CD4-positive, alpha-beta T cell (primary cell): ENCODE measurements at regions of chr4 and their contacts with region 1.

Region 1: DNA sequence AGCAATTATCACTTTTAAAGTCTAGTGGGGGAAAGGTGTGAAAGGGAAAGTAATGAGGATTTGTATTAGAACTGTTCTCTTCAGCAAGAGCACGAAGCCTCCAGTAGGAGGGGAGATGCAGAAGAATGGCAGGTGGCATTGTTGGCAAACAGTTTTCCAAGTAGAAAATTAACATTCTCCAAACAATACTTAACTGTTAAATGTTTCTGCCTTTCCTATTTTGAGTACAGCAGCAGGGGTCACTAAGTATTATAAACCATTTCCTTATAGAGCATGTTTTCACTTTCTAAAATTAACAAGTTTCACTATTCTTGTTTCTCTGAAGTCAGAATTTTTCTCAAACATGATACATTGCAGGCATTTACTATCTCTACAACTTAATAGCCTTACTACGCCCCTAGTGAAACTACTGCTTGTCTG is 58.7 kb downstream of the LEF1 start:
- DNase-seq: peak in 1 of 14 experiments; percentile 10
- ATAC-seq: no peak
- H3K4me3 ChIP-seq: peak overlapping the region; percentile 2
- H3K4me3 Mint-ChIP-seq: peak overlapping the region; percentile 73
- H3K27ac ChIP-seq: peak overlapping the region; percentile 48 to 89
- H3K27ac Mint-ChIP-seq: peak overlapping the region; percentile 92
- H3K4me1 ChIP-seq: peaks cover 85% of the 10 kb centered on the region
- H3K4me1 Mint-ChIP-seq: peaks cover 95% of the 10 kb centered on the region
- H3K27me3 ChIP-seq: no peaks in the 10 kb centered on the region
- H3K27me3 Mint-ChIP-seq: no peaks in the 10 kb centered on the region
- CTCF ChIP-seq: no peak

Region 2: GRCh38 chr4:106444557-106444956 is 1665.5 kb before region 1 on chr4:
- CTCF ChIA-PET with region 1: no interaction called
- POLR2A ChIA-PET with region 1: no interaction called
- intact Hi-C with region 1: no loop called
- DNase-seq: no peak
- ATAC-seq: no peak
- H3K4me3 ChIP-seq: no peak overlapping the region
- H3K4me3 Mint-ChIP-seq: no peak overlapping the region
- H3K27ac ChIP-seq: no peak overlapping the region
- H3K27ac Mint-ChIP-seq: no peak overlapping the region
- H3K4me1 ChIP-seq: no peaks in the 10 kb centered on the region
- H3K4me1 Mint-ChIP-seq: no peaks in the 10 kb centered on the region
- H3K27me3 ChIP-seq: no peaks in the 10 kb centered on the region
- H3K27me3 Mint-ChIP-seq: no peaks in the 10 kb centered on the region
- CTCF ChIP-seq: no peak

Region 3: DNA sequence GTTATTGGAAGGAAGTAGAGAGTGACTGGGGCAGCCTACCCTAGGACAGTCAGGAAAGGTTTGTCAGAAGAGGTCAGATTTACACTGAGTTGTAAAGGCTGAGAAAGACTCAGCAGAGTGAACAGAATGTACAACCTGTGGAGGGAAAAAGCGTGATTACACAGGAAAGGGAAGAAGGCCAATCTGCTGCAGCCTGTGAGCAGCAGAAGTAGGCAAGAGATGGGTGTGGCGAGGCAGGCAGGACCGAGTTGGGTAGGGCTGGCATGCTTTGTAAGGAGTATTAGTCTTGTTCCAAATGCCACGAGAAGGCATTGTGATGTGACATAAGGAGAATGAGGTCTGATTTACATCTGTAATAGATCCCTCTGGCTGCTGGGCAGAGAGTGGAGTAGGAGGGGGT is 272.7 kb before region 1 on chr4:
- CTCF ChIA-PET with region 1: no interaction called
- POLR2A ChIA-PET with region 1: no interaction called
- intact Hi-C with region 1: no loop called
- DNase-seq: peak in 2 of 14 experiments; percentile 14 to 15
- ATAC-seq: no peak
- H3K4me3 ChIP-seq: no peak overlapping the region
- H3K4me3 Mint-ChIP-seq: no peak overlapping the region
- H3K27ac ChIP-seq: no peak overlapping the region
- H3K27ac Mint-ChIP-seq: no peak overlapping the region
- H3K4me1 ChIP-seq: no peaks in the 10 kb centered on the region
- H3K4me1 Mint-ChIP-seq: no peaks in the 10 kb centered on the region
- H3K27me3 ChIP-seq: no peaks in the 10 kb centered on the region
- H3K27me3 Mint-ChIP-seq: peaks cover 5% of the 10 kb centered on the region
- CTCF ChIP-seq: no peak

Region 4: DNA sequence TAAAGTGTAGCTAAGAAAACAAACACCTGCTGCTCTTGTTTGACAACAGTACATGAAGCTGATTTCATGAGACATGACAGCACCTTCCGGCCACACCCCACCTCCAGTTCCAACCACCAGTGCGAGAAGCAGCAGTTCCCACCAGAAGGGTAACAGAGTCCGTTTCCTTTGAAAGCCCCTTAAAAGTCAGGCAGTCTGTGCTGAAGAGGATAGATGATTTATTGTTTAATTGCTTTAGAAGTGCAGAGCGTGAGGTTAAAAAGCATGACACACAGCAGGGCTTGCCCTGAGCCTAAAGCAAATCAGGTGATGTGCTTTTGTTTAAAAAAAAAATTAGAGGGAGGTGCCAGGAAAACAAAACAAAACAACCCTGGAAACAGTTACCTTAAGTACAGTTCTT is 37.7 kb before region 1 on chr4:
- CTCF ChIA-PET with region 1: interaction called, 4 read pairs
- POLR2A ChIA-PET with region 1: interaction called, 15 read pairs
- intact Hi-C with region 1: loop called in 1 of 2 experiments (anchors 5 kb)
- DNase-seq: peak; percentile 50 to 86 (median 70)
- ATAC-seq: peak; percentile 83
- H3K4me3 ChIP-seq: no peak overlapping the region
- H3K4me3 Mint-ChIP-seq: peak overlapping the region; percentile 44
- H3K27ac ChIP-seq: peak overlapping the region; percentile 49 to 86
- H3K27ac Mint-ChIP-seq: peak overlapping the region; percentile 88
- H3K4me1 ChIP-seq: peaks cover 28% of the 10 kb centered on the region
- H3K4me1 Mint-ChIP-seq: peaks cover 81% of the 10 kb centered on the region
- H3K27me3 ChIP-seq: no peaks in the 10 kb centered on the region
- H3K27me3 Mint-ChIP-seq: no peaks in the 10 kb centered on the region
- CTCF ChIP-seq: no peak

Region 5: DNA sequence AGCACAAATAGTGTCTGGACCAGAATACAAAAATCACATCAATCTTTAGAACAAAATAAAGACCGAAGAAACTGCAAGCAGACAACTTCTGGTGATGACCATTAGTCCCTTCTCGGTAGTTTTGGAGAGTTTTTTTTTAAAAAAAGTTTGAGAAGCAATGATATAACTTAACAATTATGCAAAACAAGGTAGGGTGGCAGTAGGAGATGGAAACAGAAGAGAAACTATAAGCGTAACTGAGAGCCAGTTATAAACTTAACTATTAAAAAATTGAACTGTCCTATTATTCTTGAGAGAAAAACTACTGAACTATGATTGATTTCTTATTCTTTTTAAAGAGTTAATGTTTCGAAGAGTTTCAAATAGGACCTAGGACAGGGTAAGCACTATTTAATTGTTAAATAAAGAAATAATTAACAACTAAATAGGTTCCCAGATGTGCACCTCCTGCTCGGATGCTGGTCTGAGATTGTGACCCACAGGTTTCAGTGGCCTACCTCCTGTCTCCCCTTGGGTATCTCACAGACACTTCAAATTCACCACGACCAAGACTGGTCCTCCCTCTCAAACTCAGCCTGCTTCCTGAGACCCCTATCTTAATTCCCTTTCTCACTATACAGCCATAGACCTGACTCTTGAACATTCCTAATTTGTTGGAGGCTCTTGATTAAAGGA is 22.6 kb before region 1 on chr4:
- CTCF ChIA-PET with region 1: no interaction called
- POLR2A ChIA-PET with region 1: interaction called, 44 read pairs
- intact Hi-C with region 1: loop called in 1 of 2 experiments (anchors 2 kb)
- DNase-seq: no peak
- ATAC-seq: no peak
- H3K4me3 ChIP-seq: no peak overlapping the region
- H3K4me3 Mint-ChIP-seq: peak overlapping the region; percentile 14
- H3K27ac ChIP-seq: peak overlapping the region; percentile 13 to 33
- H3K27ac Mint-ChIP-seq: peak overlapping the region; percentile 95
- H3K4me1 ChIP-seq: peaks cover 13% of the 10 kb centered on the region
- H3K4me1 Mint-ChIP-seq: peaks cover 89% of the 10 kb centered on the region
- H3K27me3 ChIP-seq: no peaks in the 10 kb centered on the region
- H3K27me3 Mint-ChIP-seq: no peaks in the 10 kb centered on the region
- CTCF ChIP-seq: no peak

Region 6: GRCh38 chr4:108141213-108141950 is 31.4 kb after region 1 on chr4:
- CTCF ChIA-PET with region 1: interaction called, 5 read pairs
- POLR2A ChIA-PET with region 1: interaction called, 216 read pairs
- intact Hi-C with region 1: loop called in 1 of 2 experiments (anchors 2 kb)
- DNase-seq: peak in 3 of 14 experiments; percentile 26 to 41 (median 31)
- ATAC-seq: peak; percentile 18
- H3K4me3 ChIP-seq: peak overlapping the region; percentile 12
- H3K4me3 Mint-ChIP-seq: peak overlapping the region; percentile 74
- H3K27ac ChIP-seq: peak overlapping the region; percentile 10 to 67
- H3K27ac Mint-ChIP-seq: peak overlapping the region; percentile 98
- H3K4me1 ChIP-seq: peaks cover 47% of the 10 kb centered on the region
- H3K4me1 Mint-ChIP-seq: peaks cover 95% of the 10 kb centered on the region
- H3K27me3 ChIP-seq: no peaks in the 10 kb centered on the region
- H3K27me3 Mint-ChIP-seq: no peaks in the 10 kb centered on the region
- CTCF ChIP-seq: no peak

Region 7: DNA sequence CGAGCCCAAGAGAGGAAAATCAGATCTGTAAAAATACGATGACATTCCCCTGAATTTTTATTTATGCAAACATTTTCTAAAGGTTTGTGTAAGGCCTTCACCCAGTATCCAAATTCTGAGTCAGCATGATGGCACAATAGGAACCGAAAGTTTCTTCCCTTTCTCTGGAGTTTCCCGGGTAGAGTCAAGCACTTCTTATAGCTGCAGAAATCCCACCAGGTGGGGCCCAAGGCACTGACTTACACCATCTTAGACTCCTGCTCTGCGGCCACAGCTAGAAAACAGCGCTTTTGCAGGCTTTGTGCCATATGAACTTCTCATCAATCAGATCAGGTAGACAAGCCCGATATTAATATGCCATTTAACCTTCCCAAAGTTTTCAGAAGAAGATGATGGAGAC is 45.4 kb after region 1 on chr4:
- CTCF ChIA-PET with region 1: interaction called, 9 read pairs
- POLR2A ChIA-PET with region 1: interaction called, 52 read pairs
- intact Hi-C with region 1: loop called in 1 of 2 experiments (anchors 10 kb)
- DNase-seq: peak in 6 of 14 experiments; percentile 40 to 79 (median 56)
- ATAC-seq: peak; percentile 62
- H3K4me3 ChIP-seq: peak overlapping the region; percentile 24
- H3K4me3 Mint-ChIP-seq: peak overlapping the region; percentile 87
- H3K27ac ChIP-seq: peak overlapping the region; percentile 10 to 61
- H3K27ac Mint-ChIP-seq: peak overlapping the region; percentile 79
- H3K4me1 ChIP-seq: peaks cover 37% of the 10 kb centered on the region
- H3K4me1 Mint-ChIP-seq: peaks cover 89% of the 10 kb centered on the region
- H3K27me3 ChIP-seq: no peaks in the 10 kb centered on the region
- H3K27me3 Mint-ChIP-seq: no peaks in the 10 kb centered on the region
- CTCF ChIP-seq: peak; percentile 44

Region 8: GRCh38 chr4:108355186-108355901 is 245.3 kb after region 1 on chr4:
- CTCF ChIA-PET with region 1: no interaction called
- POLR2A ChIA-PET with region 1: interaction called, 6 read pairs
- intact Hi-C with region 1: loop called in 1 of 2 experiments (anchors 5 kb)
- DNase-seq: peak in 8 of 14 experiments; percentile 36 to 86 (median 55)
- ATAC-seq: peak; percentile 86
- H3K4me3 ChIP-seq: no peak overlapping the region
- H3K4me3 Mint-ChIP-seq: peak overlapping the region; percentile 47
- H3K27ac ChIP-seq: peak overlapping the region; percentile 69
- H3K27ac Mint-ChIP-seq: peak overlapping the region; percentile 87
- H3K4me1 ChIP-seq: peaks cover 40% of the 10 kb centered on the region
- H3K4me1 Mint-ChIP-seq: peaks cover 78% of the 10 kb centered on the region
- H3K27me3 ChIP-seq: no peaks in the 10 kb centered on the region
- H3K27me3 Mint-ChIP-seq: no peaks in the 10 kb centered on the region
- CTCF ChIP-seq: no peak